Natural killer cell (primary cell): ENCODE measurements at regions of chr1 and their contacts with region 1.

Region 1: DNA sequence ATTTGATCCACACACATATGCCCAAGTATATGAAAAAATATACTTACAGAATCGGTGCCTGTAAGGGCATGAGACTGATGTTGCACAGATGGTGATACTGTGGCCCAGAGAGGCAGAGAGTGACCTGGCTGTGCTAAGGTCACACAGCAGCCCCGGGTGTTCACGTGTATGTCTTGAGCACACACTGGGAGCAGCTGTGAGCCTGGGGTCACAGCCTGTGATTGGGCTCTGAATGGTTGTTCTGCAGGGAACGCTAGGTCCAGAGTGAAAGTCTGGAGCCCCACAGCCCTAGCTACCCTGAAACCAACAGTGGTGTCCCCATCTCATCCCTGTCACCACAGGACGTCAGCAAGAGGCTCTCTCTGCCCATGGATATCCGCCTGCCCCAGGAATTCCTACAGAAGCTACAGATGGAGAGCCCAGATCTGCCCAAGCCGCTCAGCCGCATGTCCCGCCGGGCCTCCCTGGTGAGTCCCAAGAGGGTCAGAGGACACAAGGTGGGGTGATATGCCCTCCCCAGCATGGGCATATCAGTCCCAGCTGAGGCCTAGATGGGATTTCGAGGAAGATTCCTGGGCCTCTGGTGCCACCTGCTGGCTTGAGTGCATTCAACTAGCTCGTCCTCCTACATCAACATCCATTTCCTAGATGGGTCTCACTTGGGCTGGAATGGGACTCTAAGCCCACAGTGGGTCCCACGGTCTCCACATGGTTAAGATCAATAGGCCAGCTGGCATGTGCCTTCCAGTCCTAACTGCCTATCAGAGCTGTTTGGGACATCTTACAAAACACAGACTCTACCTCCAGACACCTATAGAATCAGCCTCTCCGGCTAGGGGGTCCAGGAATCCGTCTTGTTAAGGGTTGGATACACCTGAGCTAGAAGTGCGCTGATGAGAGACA is 19.7 kb downstream of the CDK18 start:
- DNase-seq: peak; percentile 61 to 85
- ATAC-seq: peak; percentile 42 to 67 (median 64)
- H3K4me3 ChIP-seq: no peak overlapping the region
- H3K4me3 Mint-ChIP-seq: no peak overlapping the region
- H3K27ac ChIP-seq: no peak overlapping the region
- H3K27ac Mint-ChIP-seq: no peak overlapping the region
- H3K4me1 ChIP-seq: peaks cover 6% of the 10 kb centered on the region
- H3K4me1 Mint-ChIP-seq: peaks cover 0 to 1% of the 10 kb centered on the region in 2 donors
- H3K27me3 ChIP-seq: no peaks in the 10 kb centered on the region
- H3K27me3 Mint-ChIP-seq: peaks cover 0 to 5% of the 10 kb centered on the region in 2 donors
- CTCF ChIP-seq: peak; percentile 69

Region 2: DNA sequence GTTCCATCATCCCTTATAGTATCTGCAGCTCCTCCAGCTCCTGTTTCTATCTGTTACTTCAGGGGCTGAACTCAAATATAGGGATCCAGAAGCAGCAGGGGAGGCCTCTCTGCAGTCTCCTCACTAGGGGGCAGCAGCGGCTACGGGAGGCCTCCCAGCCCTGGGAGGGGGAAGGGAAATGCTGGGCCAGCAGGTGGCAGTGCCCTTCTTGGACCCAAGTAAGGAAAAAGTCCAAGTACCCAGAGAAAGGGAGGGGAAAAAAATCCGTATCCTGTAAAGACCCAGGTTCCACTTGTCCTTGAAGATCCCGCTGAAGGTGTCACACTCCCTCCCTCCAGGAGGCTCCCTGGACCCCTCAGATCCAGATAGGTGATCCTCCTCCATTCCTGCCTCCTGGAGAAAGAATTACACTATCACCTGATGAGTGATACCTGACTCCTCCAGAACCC is 188.5 kb before region 1 on chr1:
- intact Hi-C with region 1: loop called (anchors 1 kb)
- DNase-seq: peak; percentile 60 to 87
- ATAC-seq: peak; percentile 74 to 98 (median 97)
- H3K4me3 ChIP-seq: no peak overlapping the region
- H3K4me3 Mint-ChIP-seq: no peak overlapping the region
- H3K27ac ChIP-seq: no peak overlapping the region
- H3K27ac Mint-ChIP-seq: no peak overlapping the region
- H3K4me1 ChIP-seq: no peaks in the 10 kb centered on the region
- H3K4me1 Mint-ChIP-seq: no peaks in the 10 kb centered on the region
- H3K27me3 ChIP-seq: no peaks in the 10 kb centered on the region
- H3K27me3 Mint-ChIP-seq: peaks cover 0 to 5% of the 10 kb centered on the region in 2 donors
- CTCF ChIP-seq: peak; percentile 86

Region 3: DNA sequence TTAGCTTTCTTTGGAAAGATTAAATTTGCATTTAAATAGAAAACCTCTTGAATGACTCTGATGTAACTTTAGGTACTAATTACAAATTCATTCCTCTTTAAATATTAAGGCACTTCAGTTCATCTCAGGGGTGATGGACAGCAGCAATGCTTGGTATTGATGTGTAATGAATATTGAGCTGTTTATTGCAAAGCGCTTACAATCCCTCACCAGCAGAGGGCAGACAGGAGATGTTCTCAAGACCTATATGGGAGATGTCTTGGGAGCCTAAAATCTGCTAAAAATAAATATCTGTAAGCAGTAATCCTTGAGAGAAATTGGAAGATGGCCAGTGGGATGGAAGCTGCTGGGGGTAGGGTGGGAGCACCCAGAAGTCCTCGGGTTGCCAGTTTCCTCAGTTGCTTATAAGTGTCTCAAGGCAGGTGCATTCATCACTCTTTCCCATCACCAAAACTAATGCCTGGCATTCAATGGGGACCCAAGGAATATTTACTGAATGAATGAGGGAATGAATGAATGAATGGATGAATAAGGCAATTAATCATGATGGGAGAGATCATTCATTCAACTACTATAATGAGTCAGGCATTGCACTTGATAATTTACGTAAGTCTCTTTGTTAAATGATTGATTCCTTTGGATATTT is 169.8 kb before region 1 on chr1:
- intact Hi-C with region 1: loop called (anchors 1 kb)
- DNase-seq: peak; percentile 29 to 85
- ATAC-seq: peak; percentile 51 to 81 (median 80)
- H3K4me3 ChIP-seq: no peak overlapping the region
- H3K4me3 Mint-ChIP-seq: no peak overlapping the region
- H3K27ac ChIP-seq: no peak overlapping the region
- H3K27ac Mint-ChIP-seq: no peak overlapping the region
- H3K4me1 ChIP-seq: peaks cover 10% of the 10 kb centered on the region
- H3K4me1 Mint-ChIP-seq: no peaks in the 10 kb centered on the region
- H3K27me3 ChIP-seq: no peaks in the 10 kb centered on the region
- H3K27me3 Mint-ChIP-seq: peaks cover 14 to 31% of the 10 kb centered on the region in 2 donors
- CTCF ChIP-seq: peak; percentile 90

Region 4: DNA sequence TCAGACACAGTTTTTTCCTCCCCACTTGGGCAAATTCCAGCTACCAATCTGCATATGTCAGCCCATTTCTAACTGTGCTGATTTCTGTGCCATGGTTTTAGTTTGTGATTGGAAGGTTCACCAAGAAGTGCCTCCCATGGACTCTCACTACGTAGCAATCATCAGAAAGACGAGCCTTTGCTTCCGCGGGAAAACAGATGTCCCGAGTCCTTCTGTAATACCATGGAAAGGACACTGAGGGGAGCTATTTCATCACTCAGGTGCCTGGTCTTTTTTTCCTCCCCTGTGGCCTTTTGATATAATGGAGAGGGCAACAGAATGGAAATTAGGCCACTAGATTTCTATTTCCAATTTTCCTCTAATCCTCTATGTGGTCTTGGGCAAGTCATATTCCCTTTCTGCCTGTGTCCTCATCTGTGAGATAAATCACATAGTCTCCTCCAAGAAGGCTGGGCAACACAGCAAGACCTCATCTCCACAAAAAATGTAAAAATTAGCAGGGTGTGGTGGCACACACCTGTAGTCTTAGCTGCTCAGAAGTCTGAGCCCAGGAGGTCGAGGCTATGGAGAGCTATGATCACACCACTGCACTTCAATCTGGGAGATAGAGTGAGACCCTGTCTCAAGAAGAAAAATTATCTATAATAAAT is 127.0 kb before region 1 on chr1:
- intact Hi-C with region 1: loop called (anchors 1 kb)
- DNase-seq: peak in 1 of 2 donors; percentile 71
- ATAC-seq: peak; percentile 52 to 74 (median 57)
- H3K4me3 ChIP-seq: no peak overlapping the region
- H3K4me3 Mint-ChIP-seq: no peak overlapping the region
- H3K27ac ChIP-seq: no peak overlapping the region
- H3K27ac Mint-ChIP-seq: no peak overlapping the region
- H3K4me1 ChIP-seq: no peaks in the 10 kb centered on the region
- H3K4me1 Mint-ChIP-seq: no peaks in the 10 kb centered on the region
- H3K27me3 ChIP-seq: peaks cover 3% of the 10 kb centered on the region
- H3K27me3 Mint-ChIP-seq: peaks cover 21 to 27% of the 10 kb centered on the region in 2 donors
- CTCF ChIP-seq: peak; percentile 70

Region 5: DNA sequence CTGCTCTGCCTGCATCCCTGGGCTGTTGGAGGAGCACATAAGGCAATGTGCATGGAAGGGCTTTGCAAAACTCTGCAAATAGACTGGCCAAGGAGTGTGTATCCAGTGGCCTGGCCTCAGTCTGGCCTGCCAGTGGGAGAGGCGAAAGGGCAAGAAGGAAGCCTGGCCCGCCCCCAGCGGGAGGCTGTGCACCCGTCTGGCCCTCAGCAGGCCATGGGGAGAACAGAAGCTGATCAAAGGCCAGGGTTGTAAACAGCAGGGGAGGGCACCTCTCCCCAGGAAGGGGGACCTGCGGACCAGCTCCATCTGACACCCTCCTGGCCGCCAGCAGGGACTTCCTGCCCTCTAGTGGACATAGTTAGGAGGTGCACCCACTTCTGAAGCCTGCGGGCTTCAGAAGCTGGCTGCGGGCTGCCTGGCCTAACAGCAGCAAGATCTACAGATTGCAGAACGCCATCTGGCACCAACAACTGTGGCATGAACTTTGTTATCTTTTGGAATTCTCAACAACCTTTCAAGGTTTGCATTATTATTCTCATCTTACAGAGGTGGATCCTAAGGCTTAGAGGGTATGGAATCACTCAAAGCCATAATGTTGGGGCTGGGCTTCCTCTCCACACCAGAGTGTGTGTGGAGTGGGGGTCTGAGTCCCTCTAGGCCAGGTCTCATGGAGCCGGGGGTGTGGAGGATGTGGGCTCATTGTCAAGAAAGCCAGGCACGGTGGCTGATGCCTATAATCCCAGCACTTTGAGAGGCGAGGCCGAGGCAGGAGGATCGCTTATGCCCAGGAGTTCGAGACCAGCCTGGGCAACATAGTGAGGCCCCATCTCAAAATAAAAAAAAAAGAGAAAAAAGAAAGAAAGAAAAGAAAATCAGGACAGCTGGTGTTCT is 38.6 kb before region 1 on chr1:
- intact Hi-C with region 1: loop called (anchors 1 kb)
- DNase-seq: peak; percentile 59 to 87
- ATAC-seq: peak; percentile 56 to 80 (median 62)
- H3K4me3 ChIP-seq: no peak overlapping the region
- H3K4me3 Mint-ChIP-seq: no peak overlapping the region
- H3K27ac ChIP-seq: no peak overlapping the region
- H3K27ac Mint-ChIP-seq: peak overlapping the region in 1 of 2 donors; percentile 83
- H3K4me1 ChIP-seq: peaks cover 52% of the 10 kb centered on the region
- H3K4me1 Mint-ChIP-seq: peaks cover 43 to 56% of the 10 kb centered on the region in 2 donors
- H3K27me3 ChIP-seq: no peaks in the 10 kb centered on the region
- H3K27me3 Mint-ChIP-seq: peaks cover 8 to 29% of the 10 kb centered on the region in 2 donors
- CTCF ChIP-seq: peak; percentile 91

Region 6: DNA sequence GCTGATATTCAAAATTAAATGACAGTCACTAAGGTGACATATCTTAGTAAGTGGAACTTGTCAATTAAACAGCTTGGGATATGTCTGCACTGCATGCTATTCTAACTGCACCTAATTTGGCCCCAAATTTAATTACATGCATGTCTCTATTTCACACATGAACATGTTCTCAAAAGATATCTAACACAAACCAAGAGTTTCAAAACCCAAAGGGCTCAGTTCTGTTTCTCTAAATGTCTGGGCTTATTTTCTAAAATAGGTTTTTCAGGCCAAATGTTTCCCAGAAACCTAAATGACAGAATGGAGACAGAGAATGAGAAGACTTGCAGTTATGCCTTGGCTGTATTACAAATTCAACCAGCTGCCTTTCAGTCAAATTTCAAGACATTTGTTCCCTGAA is 239.8 kb after region 1 on chr1:
- intact Hi-C with region 1: no loop called
- DNase-seq: no peak
- ATAC-seq: no peak
- H3K4me3 ChIP-seq: no peak overlapping the region
- H3K4me3 Mint-ChIP-seq: no peak overlapping the region
- H3K27ac ChIP-seq: no peak overlapping the region
- H3K27ac Mint-ChIP-seq: peak overlapping the region; percentile 47 to 98
- H3K4me1 ChIP-seq: no peaks in the 10 kb centered on the region
- H3K4me1 Mint-ChIP-seq: peaks cover 25 to 31% of the 10 kb centered on the region in 2 donors
- H3K27me3 ChIP-seq: no peaks in the 10 kb centered on the region
- H3K27me3 Mint-ChIP-seq: no peaks in the 10 kb centered on the region
- CTCF ChIP-seq: no peak